Mammary epithelial cell (primary cell): ENCODE measurements at regions of chr19 and their contacts with region 1.

Region 1: DNA sequence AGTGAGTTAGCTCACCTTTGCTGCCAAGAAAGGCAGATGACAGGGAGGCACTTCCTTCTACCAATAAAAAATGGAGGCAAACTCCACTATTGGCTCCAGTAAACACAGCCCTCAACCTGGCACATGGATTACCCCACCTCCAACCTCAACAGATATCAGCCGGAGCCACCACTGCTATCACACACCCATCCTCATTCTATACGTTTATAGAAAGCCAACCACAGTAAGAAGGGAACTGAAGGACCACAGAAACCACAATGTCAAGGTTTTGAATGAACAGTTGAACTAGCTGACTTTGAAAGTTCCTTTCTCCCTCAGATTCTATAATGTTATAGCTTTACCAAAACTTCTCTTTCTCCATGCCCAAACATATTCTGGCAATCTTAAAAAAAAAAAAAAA is 526.2 kb downstream of the UQCRFS1 start:
- DNase-seq: no peak
- H3K4me3 ChIP-seq: no peak overlapping the region
- H3K27ac ChIP-seq: no peak overlapping the region
- H3K4me1 ChIP-seq: no peaks in the 10 kb centered on the region
- H3K27me3 ChIP-seq: no peaks in the 10 kb centered on the region
- CTCF ChIP-seq: no peak

Region 2: DNA sequence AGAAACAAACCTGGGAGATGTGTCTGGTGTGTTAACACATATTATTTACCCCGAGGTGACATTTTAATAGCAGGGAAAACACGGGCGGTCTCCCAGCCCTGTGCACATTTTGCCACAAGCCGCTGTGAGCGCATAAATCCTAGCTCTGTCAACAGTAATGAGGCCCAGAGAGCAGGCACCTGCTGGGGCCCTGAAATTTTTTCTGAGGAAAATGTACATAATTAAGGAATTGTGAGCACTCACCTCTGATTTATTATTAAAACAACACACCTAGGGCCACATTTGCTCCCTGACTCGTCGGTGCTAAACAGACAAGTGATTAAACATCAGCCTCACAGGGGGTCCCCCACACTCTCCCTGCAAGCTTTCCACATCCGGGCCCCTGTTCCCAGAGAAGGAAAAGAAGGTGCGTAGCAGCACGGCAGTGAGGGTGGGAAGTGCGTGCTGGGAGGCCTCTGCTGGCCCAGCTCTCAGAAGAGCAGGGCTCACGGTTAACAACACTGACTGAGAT is 90.1 kb before region 1 on chr19:
- CTCF ChIA-PET with region 1: no interaction called
- dilution Hi-C with region 1: no loop called
- in situ Hi-C with region 1: no loop called
- intact Hi-C with region 1: no loop called
- DNase-seq: no peak
- H3K4me3 ChIP-seq: no peak overlapping the region
- H3K27ac ChIP-seq: no peak overlapping the region
- H3K4me1 ChIP-seq: no peaks in the 10 kb centered on the region
- H3K27me3 ChIP-seq: no peaks in the 10 kb centered on the region
- CTCF ChIP-seq: no peak

Region 3: DNA sequence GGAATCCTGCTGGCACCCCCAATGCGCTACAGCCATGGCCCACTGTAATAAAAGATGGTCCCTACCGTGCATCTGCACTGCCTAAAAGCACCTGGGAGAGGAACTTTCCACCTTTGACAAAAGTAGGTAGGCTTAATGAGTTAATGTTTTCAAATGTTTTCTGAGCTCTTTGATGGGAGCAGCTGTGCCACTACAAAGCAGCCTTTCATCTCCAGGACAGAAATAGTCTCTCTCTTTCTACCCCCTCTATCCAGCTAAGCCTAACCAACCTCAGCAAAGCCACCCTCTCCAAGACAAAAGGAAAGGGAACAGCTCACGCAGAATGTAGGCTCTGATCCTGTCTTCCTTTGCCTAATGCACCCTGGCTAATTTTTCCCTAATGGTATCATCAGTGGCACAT is 34.0 kb before region 1 on chr19:
- CTCF ChIA-PET with region 1: no interaction called
- dilution Hi-C with region 1: no loop called
- in situ Hi-C with region 1: no loop called
- intact Hi-C with region 1: no loop called
- DNase-seq: no peak
- H3K4me3 ChIP-seq: no peak overlapping the region
- H3K27ac ChIP-seq: no peak overlapping the region
- H3K4me1 ChIP-seq: no peaks in the 10 kb centered on the region
- H3K27me3 ChIP-seq: no peaks in the 10 kb centered on the region
- CTCF ChIP-seq: no peak

Region 4: DNA sequence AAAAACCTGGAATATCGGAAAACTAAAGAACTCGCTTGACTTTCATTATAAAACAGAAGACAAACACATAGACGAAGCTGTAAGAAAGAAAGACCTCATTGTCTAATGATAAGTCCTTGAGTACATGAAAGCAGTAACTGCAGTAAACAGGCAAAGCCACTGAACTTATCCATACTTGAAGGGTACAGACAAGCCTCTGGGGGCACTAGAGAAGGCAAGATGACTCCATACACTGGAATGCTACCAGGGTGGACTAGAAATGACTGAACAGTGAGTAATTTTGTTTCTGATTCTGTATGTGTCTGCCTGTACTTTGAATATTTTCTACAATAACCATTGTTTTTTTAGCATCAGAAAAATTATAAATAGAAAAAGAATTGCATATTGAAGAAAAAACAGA is 18.3 kb after region 1 on chr19:
- CTCF ChIA-PET with region 1: interaction called, 17 read pairs
- dilution Hi-C with region 1: no loop called
- in situ Hi-C with region 1: no loop called
- intact Hi-C with region 1: no loop called
- DNase-seq: peak; percentile 83
- H3K4me3 ChIP-seq: no peak overlapping the region
- H3K27ac ChIP-seq: peak overlapping the region; percentile 52
- H3K4me1 ChIP-seq: peaks cover 32% of the 10 kb centered on the region
- H3K27me3 ChIP-seq: no peaks in the 10 kb centered on the region
- CTCF ChIP-seq: peak; percentile 60 to 82